Activated T-helper 2 cell treated with anti-CD3 and anti-CD28 coated beads, Interferon-gamma antibody, Interleukin-2, Interleukin-4, amounts not matched to agents 10 μg/mL and 5 μg/mL and 100 μg/mL, durations not matched to agents 14 hours and 24 hours and 36 hours (primary cell): ENCODE measurements at regions of chr1 and their contacts with region 1.

Region 1: DNA sequence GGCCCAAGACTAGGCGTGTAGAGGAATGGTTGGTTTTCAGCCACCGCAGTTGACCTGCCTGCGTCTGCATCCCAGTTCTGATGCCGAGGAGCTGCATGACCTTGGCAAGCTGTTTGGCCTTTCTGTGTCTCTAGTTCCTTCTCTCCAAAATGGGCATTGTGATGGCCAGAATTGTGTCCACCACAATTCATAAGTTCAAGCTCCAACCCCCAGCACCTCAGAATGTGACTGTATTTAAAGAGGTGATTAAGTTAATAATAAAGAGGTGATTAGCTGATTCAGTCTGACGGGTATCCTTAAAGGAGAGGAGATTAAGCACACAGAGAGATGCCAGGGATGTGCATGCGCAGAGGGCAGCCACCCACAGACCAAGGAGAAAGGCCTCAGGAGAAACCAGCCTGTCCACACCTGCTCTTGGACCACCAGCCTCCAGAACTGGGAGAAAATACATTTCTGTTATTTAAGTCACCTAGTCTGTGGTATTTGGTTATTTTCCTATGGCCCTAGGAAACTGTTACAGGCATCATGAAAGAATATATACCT is 28.5 kb downstream of the MAB21L3 start:
- DNase-seq: no peak
- H3K4me3 Mint-ChIP-seq: no peak overlapping the region
- H3K27ac Mint-ChIP-seq: no peak overlapping the region
- H3K4me1 Mint-ChIP-seq: peaks cover 7% of the 10 kb centered on the region
- H3K27me3 Mint-ChIP-seq: peaks cover 14% of the 10 kb centered on the region

Region 2: GRCh38 chr1:116168277-116169097 is 28.8 kb after region 1 on chr1:
- intact Hi-C with region 1: loop called (anchors 1 kb)
- DNase-seq: peak; percentile 75
- H3K4me3 Mint-ChIP-seq: peak overlapping the region; percentile 74
- H3K27ac Mint-ChIP-seq: peak overlapping the region; percentile 45
- H3K4me1 Mint-ChIP-seq: peaks cover 6% of the 10 kb centered on the region
- H3K27me3 Mint-ChIP-seq: peaks cover 21% of the 10 kb centered on the region

Region 3: GRCh38 chr1:116498789-116499628 is 359.3 kb after region 1 on chr1:
- intact Hi-C with region 1: loop called (anchors 1 kb)
- DNase-seq: no peak
- H3K4me3 Mint-ChIP-seq: no peak overlapping the region
- H3K27ac Mint-ChIP-seq: no peak overlapping the region
- H3K4me1 Mint-ChIP-seq: peaks cover 36% of the 10 kb centered on the region
- H3K27me3 Mint-ChIP-seq: no peaks in the 10 kb centered on the region